ENCODE measurements at regions of chr5 and their contacts with region 1.

Region 1: DNA sequence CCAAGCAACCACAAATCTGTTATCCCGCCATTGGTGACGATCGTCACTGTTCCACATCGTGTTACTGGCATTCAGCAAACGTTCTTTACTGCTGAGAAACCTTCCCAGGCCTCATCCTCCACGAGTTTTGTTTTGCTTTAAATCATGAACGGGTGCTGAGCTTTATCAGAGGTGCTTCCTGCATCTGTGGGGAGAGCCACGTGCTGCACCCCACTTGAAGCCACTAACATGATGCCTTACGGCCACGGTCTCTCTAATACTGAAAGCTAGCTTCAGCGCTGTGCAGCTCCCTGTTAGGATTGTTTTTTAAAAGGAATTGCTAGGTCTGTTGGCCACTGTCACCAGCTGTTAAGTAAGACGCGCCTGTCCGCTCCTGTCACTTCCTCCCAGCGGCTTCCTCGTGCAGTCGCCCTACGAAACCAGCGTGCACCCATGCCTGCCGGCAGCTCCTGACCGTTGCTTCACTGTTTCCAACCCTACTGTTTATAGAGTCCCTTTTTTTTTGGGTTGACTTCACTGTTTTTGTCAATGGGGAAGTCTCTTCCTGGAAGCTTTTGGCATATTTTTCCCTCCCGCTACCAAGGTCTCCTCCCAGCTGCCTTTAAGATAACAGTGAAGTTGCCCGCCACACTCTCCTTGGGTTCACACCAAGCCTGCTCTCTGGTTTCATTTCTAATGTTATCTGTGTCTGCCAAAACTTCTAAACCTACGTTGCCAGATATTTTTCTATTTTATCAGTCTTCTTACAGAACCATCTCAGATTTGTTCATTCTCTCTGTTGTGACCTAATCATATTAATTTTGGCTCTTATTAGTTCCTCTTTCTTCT is 20.3 kb downstream of the LPCAT1 start:
- DNase-seq: no peak
- H3K4me3 ChIP-seq: no peak overlapping the region
- H3K27ac ChIP-seq: no peak overlapping the region
- H3K4me1 ChIP-seq: peaks cover 2 to 38% (median 27%) of the 10 kb centered on the region in 4 experiments
- H3K27me3 ChIP-seq: no peaks in the 10 kb centered on the region
- CTCF ChIP-seq: no peak
- EP300 ChIP-seq: no peak
- POLR2A ChIP-seq: no peak
- RAD21 ChIP-seq: no peak

Region 2: DNA sequence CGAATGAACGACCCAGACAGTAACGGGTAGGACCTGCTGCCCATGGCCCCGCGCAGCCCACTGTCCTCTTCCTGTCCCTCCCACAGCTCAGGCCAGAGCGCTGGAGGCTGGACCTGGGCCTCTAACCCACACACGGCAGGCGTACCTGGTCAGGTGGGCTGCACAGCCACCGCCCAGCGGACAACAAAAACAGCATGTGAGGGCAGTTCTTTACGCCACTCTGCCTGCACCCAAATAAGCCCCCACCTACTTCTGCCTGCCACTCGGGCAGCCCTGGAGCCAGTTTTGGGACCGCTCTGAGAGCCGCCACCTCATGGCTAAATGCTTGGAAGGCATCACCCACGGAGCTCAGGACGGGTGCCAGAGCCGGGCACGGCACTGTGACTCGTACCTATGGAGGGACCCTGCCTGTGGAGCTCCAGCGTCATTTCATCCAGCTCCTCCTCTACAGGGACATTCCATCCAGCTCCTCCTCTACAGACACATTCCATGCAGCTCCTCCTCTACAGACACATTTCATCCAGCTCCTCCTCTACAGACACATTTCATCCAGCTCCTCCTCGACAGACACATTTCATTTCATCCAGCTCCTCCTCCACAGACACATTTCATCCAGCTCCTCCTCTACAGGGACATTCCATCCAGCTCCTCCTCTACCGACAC is 177.5 kb before region 1 on chr5:
- CTCF ChIA-PET with region 1: no interaction called
- POLR2A ChIA-PET with region 1: no interaction called
- DNase-seq: no peak
- H3K4me3 ChIP-seq: no peak overlapping the region
- H3K27ac ChIP-seq: no peak overlapping the region
- H3K4me1 ChIP-seq: no peaks in the 10 kb centered on the region; a peak in 1 of 7 replicates
- H3K27me3 ChIP-seq: no peaks in the 10 kb centered on the region
- CTCF ChIP-seq: no peak
- EP300 ChIP-seq: no peak
- POLR2A ChIP-seq: no peak
- RAD21 ChIP-seq: no peak

Region 3: GRCh38 chr5:1479581-1480188 is 23.8 kb before region 1 on chr5:
- CTCF ChIA-PET with region 1: interaction called, 13 read pairs
- POLR2A ChIA-PET with region 1: interaction called, 3 read pairs
- DNase-seq: peak in 1 of 2 experiments; percentile 76
- H3K4me3 ChIP-seq: no peak overlapping the region
- H3K27ac ChIP-seq: no peak overlapping the region
- H3K4me1 ChIP-seq: peaks cover 0 to 4% (median under 1%) of the 10 kb centered on the region in 4 experiments; a peak in 2 of 7 replicates
- H3K27me3 ChIP-seq: no peaks in the 10 kb centered on the region
- CTCF ChIP-seq: peak in 2 of 3 experiments; percentile 79 to 81; a peak in 3 of 4 replicates
- EP300 ChIP-seq: no peak
- POLR2A ChIP-seq: 0 out of 3 replicates have a peak, but pooled peaks of 1 of the 2 experiments have one; percentile 25
- RAD21 ChIP-seq: peak; percentile 62 to 76

Region 4: GRCh38 chr5:1488943-1489680 is 14.3 kb before region 1 on chr5:
- CTCF ChIA-PET with region 1: interaction called, 32 read pairs
- POLR2A ChIA-PET with region 1: interaction called, 3 read pairs
- DNase-seq: no peak
- H3K4me3 ChIP-seq: no peak overlapping the region
- H3K27ac ChIP-seq: no peak overlapping the region
- H3K4me1 ChIP-seq: no peaks in the 10 kb centered on the region
- H3K27me3 ChIP-seq: no peaks in the 10 kb centered on the region
- CTCF ChIP-seq: no peak
- EP300 ChIP-seq: no peak
- POLR2A ChIP-seq: no peak
- RAD21 ChIP-seq: no peak

Region 5: GRCh38 chr5:1516751-1517601 is 13.5 kb after region 1 on chr5:
- CTCF ChIA-PET with region 1: interaction called, 34 read pairs
- POLR2A ChIA-PET with region 1: interaction called, 39 read pairs
- DNase-seq: peak in 1 of 2 experiments; percentile 45
- H3K4me3 ChIP-seq: no peak overlapping the region
- H3K27ac ChIP-seq: peak overlapping the region; percentile 95; the same call in 1 of the 2 replicates
- H3K4me1 ChIP-seq: peaks cover 17 to 76% (median 60%) of the 10 kb centered on the region in 4 experiments
- H3K27me3 ChIP-seq: no peaks in the 10 kb centered on the region
- CTCF ChIP-seq: no peak
- EP300 ChIP-seq: no peak
- POLR2A ChIP-seq: no peak
- RAD21 ChIP-seq: no peak

Region 6: GRCh38 chr5:1523771-1524480 is 20.5 kb after region 1 on chr5 and contains the start of gene LPCAT1:
- CTCF ChIA-PET with region 1: interaction called, 13 read pairs
- POLR2A ChIA-PET with region 1: interaction called, 9 read pairs
- DNase-seq: peak in 1 of 2 experiments; percentile 88
- H3K4me3 ChIP-seq: peak within 1 kb of the TSS; percentile 64 to 97 (median 75)
- H3K27ac ChIP-seq: peak within 1 kb of the TSS; percentile 59
- H3K4me1 ChIP-seq: peaks cover 0 to 24% (median 22%) of the 10 kb centered on the region in 4 experiments; a peak in 6 of 7 replicates
- H3K27me3 ChIP-seq: no peaks in the 10 kb centered on the region; a peak in 1 of 7 replicates
- CTCF ChIP-seq: no peak
- EP300 ChIP-seq: no peak
- POLR2A ChIP-seq: peak in 1 of 2 experiments; percentile 42; a peak in 1 of 3 replicates
- RAD21 ChIP-seq: peak in 1 of 2 experiments; percentile 7; a peak in 1 of 4 replicates
- total RNA-seq, gene LPCAT1: 260 and 266 TPM in 2 replicates

Region 7: GRCh38 chr5:1641560-1642166 is 138.2 kb after region 1 on chr5:
- CTCF ChIA-PET with region 1: interaction called, 12 read pairs
- POLR2A ChIA-PET with region 1: no interaction called
- DNase-seq: peak in 1 of 2 experiments; percentile 68
- H3K4me3 ChIP-seq: peak overlapping the region in 1 of 4 experiments; percentile 32; a peak in 1 of 8 replicates
- H3K27ac ChIP-seq: no peak overlapping the region
- H3K4me1 ChIP-seq: peaks cover 2 to 28% (median 8%) of the 10 kb centered on the region in 4 experiments
- H3K27me3 ChIP-seq: peaks cover 0 to 17% (median 11%) of the 10 kb centered on the region in 4 experiments; a peak in 6 of 7 replicates
- CTCF ChIP-seq: peak; percentile 73 to 98 (median 90)
- EP300 ChIP-seq: no peak
- POLR2A ChIP-seq: no peak
- RAD21 ChIP-seq: peak; percentile 76 to 79

Measured in H1 (cell line).